ENCODE measurements at regions of chr12 and their contacts with region 1.

Region 1: DNA sequence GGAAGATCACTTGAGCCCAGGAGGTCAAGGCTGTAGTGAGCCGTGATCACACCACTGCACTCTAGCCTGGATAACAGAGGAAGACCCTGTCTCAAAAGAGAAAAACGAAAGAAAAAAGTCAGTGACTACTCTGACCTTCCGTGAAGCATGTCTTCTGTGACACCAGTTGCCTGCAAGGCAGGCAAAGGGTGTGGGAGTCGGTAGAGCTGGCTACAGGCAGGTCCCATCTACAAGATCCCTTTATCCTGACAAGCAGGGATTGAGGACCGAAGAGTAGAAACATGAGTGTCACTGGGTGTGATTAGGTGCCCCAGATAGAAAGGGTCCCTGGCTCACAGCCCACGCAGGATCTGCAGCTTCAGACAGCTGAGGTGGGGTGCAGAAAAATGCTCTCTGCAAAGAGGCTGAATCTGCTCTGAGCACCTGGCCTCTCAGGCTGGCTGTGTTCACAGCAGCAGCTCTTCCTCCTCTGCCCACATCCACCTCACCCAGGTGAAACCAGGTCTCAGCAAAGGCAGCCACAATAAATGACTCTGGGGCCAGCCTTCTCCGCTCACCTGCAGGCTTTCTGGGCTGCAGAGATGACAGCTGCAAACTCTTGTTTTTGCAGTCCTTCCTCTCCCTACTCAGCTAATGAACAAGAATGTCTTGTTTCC is 28.6 kb upstream of the HSP90B1 start:
- DNase-seq: peak; percentile 47
- ATAC-seq: peak; percentile 76
- H3K4me3 Mint-ChIP-seq: peak overlapping the region; percentile 17
- H3K27ac Mint-ChIP-seq: peak overlapping the region; percentile 14
- H3K4me1 Mint-ChIP-seq: peaks cover 25% of the 10 kb centered on the region
- H3K27me3 Mint-ChIP-seq: no peaks in the 10 kb centered on the region

Region 2: GRCh38 chr12:103705927-103706326 is 195.7 kb before region 1 on chr12:
- CTCF ChIA-PET with region 1: no interaction called
- POLR2A ChIA-PET with region 1: no interaction called
- DNase-seq: no peak
- ATAC-seq: no peak
- H3K4me3 Mint-ChIP-seq: no peak overlapping the region
- H3K27ac Mint-ChIP-seq: no peak overlapping the region
- H3K4me1 Mint-ChIP-seq: no peaks in the 10 kb centered on the region
- H3K27me3 Mint-ChIP-seq: peaks cover 17% of the 10 kb centered on the region

Region 3: DNA sequence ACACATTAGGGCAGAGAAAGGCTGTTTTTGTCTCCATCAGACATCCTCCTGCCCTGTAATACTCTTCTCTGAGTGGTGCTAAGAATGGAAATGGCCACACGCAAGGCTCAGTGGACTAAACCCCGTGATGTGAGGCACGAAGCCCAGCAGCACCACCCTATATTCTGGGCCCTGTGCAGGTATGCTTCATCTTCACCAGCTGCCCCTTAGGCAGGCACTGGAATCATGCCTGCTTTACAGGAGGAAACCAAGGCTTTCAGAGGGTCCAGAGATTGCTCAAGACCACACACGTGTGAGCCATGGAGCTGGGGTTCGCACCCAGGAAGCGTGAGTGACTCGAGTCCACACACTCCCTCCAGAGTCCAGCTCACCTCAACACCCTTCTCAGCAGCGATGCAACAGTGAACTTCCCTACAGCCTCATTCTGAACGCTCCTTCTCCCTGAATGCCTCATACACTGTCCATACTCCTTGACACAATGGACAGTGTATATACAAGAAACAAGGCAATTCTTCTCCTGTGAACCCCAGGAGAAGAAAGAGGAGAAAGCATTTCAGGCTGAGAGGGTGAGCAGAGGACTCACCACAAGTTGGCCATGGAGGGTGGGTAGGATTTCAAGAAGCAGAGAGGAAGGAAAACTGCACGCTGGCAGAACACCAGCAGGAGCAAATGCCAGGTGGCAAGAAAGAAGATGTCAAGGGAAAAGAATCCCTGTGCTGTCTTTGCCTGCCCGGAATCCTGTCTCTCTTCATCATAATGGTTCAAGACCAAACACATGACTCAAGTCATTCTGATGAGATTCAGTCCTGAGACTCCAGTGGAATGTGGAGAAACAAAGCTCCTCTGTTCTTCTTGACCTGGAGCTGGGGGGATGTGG is 99.7 kb before region 1 on chr12:
- CTCF ChIA-PET with region 1: no interaction called
- POLR2A ChIA-PET with region 1: no interaction called
- DNase-seq: no peak
- ATAC-seq: no peak
- H3K4me3 Mint-ChIP-seq: no peak overlapping the region
- H3K27ac Mint-ChIP-seq: no peak overlapping the region
- H3K4me1 Mint-ChIP-seq: peaks cover 5% of the 10 kb centered on the region
- H3K27me3 Mint-ChIP-seq: no peaks in the 10 kb centered on the region

Region 4: DNA sequence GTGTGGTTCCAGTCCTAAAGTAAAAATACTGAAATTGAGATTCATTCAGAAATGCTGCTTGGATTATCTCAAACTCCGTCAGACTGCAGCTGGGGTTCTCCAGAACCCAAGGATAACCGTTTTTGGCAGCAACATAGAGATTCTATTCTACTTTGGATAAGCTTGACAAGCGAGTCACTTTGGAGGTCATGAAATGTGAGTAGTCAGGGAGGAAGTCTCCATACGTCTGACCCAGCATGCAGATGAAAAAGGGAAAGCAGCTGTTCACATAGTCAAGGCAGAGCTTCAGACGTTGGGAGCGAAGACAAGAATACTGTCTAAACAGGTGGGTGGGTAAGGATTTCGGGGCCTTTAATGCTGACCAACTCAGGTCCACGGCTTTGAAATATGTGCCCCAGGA is 13.7 kb after region 1 on chr12:
- CTCF ChIA-PET with region 1: interaction called, 10 read pairs
- POLR2A ChIA-PET with region 1: interaction called, 3 read pairs
- DNase-seq: no peak
- ATAC-seq: no peak
- H3K4me3 Mint-ChIP-seq: no peak overlapping the region
- H3K27ac Mint-ChIP-seq: no peak overlapping the region
- H3K4me1 Mint-ChIP-seq: no peaks in the 10 kb centered on the region
- H3K27me3 Mint-ChIP-seq: no peaks in the 10 kb centered on the region

Region 5: GRCh38 chr12:104381731-104382480 is 480.3 kb after region 1 on chr12:
- CTCF ChIA-PET with region 1: no interaction called
- POLR2A ChIA-PET with region 1: no interaction called
- DNase-seq: peak; percentile 90
- ATAC-seq: peak; percentile 90
- H3K4me3 Mint-ChIP-seq: no peak overlapping the region
- H3K27ac Mint-ChIP-seq: no peak overlapping the region
- H3K4me1 Mint-ChIP-seq: peaks cover 18% of the 10 kb centered on the region
- H3K27me3 Mint-ChIP-seq: peaks cover 9% of the 10 kb centered on the region